ENCODE measurements at regions of chr1 and their contacts with region 1.

Region 1: GRCh38 chr1:204523605-204524215 is 7.5 kb downstream of the MDM4 start:
- DNase-seq: no peak
- H3K4me3 Mint-ChIP-seq: no peak overlapping the region
- H3K27ac Mint-ChIP-seq: peak overlapping the region; percentile 71
- H3K4me1 Mint-ChIP-seq: peaks cover 64% of the 10 kb centered on the region
- H3K27me3 Mint-ChIP-seq: no peaks in the 10 kb centered on the region

Region 2: GRCh38 chr1:204323887-204324286 is 199.8 kb before region 1 on chr1:
- CTCF ChIA-PET with region 1: no interaction called
- POLR2A ChIA-PET with region 1: no interaction called
- DNase-seq: no peak
- H3K4me3 Mint-ChIP-seq: no peak overlapping the region
- H3K27ac Mint-ChIP-seq: no peak overlapping the region
- H3K4me1 Mint-ChIP-seq: peaks cover 5% of the 10 kb centered on the region
- H3K27me3 Mint-ChIP-seq: peaks cover under 1% of the 10 kb centered on the region

Region 3: GRCh38 chr1:204487256-204487615 is 36.5 kb before region 1 on chr1:
- CTCF ChIA-PET with region 1: no interaction called
- POLR2A ChIA-PET with region 1: no interaction called
- DNase-seq: no peak
- H3K4me3 Mint-ChIP-seq: no peak overlapping the region
- H3K27ac Mint-ChIP-seq: no peak overlapping the region
- H3K4me1 Mint-ChIP-seq: peaks cover 22% of the 10 kb centered on the region
- H3K27me3 Mint-ChIP-seq: no peaks in the 10 kb centered on the region

Region 4: GRCh38 chr1:204541626-204542025 is 17.9 kb after region 1 on chr1:
- CTCF ChIA-PET with region 1: interaction called, 10 read pairs
- POLR2A ChIA-PET with region 1: no interaction called
- DNase-seq: no peak
- H3K4me3 Mint-ChIP-seq: no peak overlapping the region
- H3K27ac Mint-ChIP-seq: no peak overlapping the region
- H3K4me1 Mint-ChIP-seq: peaks cover 62% of the 10 kb centered on the region
- H3K27me3 Mint-ChIP-seq: no peaks in the 10 kb centered on the region